Activated naive CD4-positive, alpha-beta T cell treated with anti-CD3 and anti-CD28 coated beads for 36 hours (primary cell): ENCODE measurements at regions of chr7 and their contacts with region 1.

Region 1: DNA sequence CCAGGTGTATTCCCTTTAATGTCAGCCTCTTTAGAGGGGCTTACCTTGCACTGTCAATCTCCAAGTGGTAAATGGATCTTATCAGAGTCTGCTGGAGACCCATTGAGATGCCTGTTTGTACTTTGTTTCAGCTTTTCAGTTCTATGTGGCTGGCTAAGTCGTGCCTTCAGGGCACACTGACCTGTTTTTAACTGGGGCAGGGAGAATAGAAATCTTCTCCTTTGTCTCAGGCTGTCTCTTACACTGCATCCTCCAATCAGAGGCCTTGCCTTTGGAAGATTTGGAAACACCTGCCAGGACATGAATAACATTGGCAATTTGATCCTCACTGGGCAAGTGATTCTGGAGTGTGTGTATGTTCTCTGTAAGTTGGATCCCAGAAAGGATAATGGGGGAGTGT is 65.0 kb downstream of the POU6F2 start:
- DNase-seq: no peak
- H3K4me3 Mint-ChIP-seq: no peak overlapping the region
- H3K27ac Mint-ChIP-seq: no peak overlapping the region
- H3K4me1 Mint-ChIP-seq: no peaks in the 10 kb centered on the region
- H3K27me3 Mint-ChIP-seq: no peaks in the 10 kb centered on the region

Region 2: DNA sequence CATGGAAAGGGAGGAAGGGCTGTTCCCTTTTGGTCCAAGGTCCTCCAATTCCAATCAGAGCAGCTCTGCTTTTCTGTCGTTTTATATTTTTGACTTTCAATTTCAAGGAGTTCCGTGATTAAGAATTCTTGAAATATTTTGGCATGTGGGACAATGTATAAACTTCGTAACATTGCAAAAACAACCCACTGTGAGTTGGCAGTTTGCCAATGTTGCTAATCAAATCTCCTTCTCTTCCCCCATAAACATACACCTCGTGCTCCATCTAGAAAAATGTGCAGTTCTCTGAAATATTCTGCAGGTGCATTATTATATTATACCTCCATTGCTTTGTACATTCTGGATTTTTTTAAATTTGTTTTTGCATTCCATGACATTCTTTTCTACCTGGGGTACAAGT is 15.2 kb before region 1 on chr7:
- CTCF ChIA-PET with region 1: no interaction called
- intact Hi-C with region 1: loop called (anchors 1 kb)
- DNase-seq: no peak
- H3K4me3 Mint-ChIP-seq: no peak overlapping the region
- H3K27ac Mint-ChIP-seq: no peak overlapping the region
- H3K4me1 Mint-ChIP-seq: no peaks in the 10 kb centered on the region
- H3K27me3 Mint-ChIP-seq: peaks cover 2% of the 10 kb centered on the region

Region 3: DNA sequence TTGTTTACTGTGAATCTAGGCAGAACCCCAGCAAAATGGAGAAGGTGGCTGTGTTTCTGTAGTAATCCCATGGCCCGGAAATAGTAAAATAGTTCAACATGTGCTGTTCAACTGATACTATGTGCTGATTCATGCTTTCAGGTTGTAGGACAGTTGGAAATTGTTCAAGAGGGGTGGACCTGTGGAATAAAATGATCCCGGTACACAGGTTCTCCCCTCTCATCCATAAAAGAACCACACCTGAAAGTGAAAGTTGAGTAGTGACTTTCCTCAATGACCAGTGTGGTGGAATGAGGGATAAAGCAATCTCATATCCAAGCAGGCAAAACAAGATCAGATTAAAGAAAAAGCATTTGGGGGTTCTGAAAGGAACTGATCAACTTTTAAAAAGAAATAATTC is 112.1 kb after region 1 on chr7:
- CTCF ChIA-PET with region 1: no interaction called
- intact Hi-C with region 1: no loop called
- DNase-seq: no peak
- H3K4me3 Mint-ChIP-seq: no peak overlapping the region
- H3K27ac Mint-ChIP-seq: no peak overlapping the region
- H3K4me1 Mint-ChIP-seq: no peaks in the 10 kb centered on the region
- H3K27me3 Mint-ChIP-seq: peaks cover 14% of the 10 kb centered on the region